Endothelial cell of umbilical vein (primary cell): ENCODE measurements at regions of chr3 and their contacts with region 1.

Region 1: GRCh38 chr3:157261000-157261399 is 101.1 kb upstream of the CCNL1 start:
- DNase-seq: no peak
- H3K4me3 ChIP-seq: no peak overlapping the region
- H3K27ac ChIP-seq: no peak overlapping the region
- H3K4me1 ChIP-seq: peaks cover 17% of the 10 kb centered on the region
- H3K27me3 ChIP-seq: no peaks in the 10 kb centered on the region
- CTCF ChIP-seq: no peak
- POLR2A ChIP-seq: no peak

Region 2: DNA sequence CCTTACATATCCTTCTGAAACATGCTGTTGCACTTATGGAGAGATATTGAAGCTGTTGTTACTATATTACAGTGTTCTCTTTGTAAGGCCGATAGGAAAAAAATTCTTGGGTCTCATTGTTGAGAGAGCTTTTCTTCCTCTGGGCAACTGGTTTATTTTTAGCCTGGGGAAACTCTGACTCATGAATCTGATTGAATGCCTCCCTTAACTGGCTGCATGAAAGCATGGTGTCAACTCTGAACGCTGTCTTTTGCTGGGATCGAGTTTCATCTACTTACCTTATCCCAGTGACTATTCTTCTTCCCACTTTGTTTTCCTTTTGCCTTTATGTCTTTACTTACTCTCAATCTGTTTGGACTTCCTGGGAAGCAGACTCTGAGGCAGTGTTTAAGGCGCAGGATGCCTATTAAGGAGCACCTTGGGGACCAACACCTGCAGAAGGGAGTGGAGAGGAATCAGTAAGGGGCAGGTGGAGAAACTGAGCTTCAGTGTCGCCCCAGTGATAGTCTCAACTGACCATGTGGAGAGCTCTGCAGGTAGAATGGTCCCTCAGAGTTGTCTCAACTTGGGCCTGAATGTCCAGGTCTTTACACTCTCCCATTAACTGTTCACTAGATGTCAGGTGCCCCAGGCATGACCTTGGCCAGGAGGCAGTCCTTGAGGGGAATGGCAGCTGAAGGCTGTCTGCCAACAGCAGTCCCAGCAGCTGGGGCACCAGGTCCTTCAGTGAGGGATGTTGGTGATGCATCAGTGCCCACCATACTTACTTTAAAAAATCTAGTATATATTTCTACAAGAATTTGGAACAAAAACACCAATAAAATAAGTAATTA is 12.2 kb before region 1 on chr3:
- CTCF ChIA-PET with region 1: interaction called, 5 read pairs
- POLR2A ChIA-PET with region 1: no interaction called
- dilution Hi-C with region 1: no loop called
- intact Hi-C with region 1: loop called (anchors 2 kb)
- DNase-seq: peak; percentile 94
- H3K4me3 ChIP-seq: no peak overlapping the region
- H3K27ac ChIP-seq: peak overlapping the region; percentile 39
- H3K4me1 ChIP-seq: peaks cover 23% of the 10 kb centered on the region
- H3K27me3 ChIP-seq: no peaks in the 10 kb centered on the region
- CTCF ChIP-seq: no peak
- POLR2A ChIP-seq: peak; percentile 37

Region 3: GRCh38 chr3:157335198-157336076 is 74.4 kb after region 1 on chr3:
- CTCF ChIA-PET with region 1: no interaction called
- POLR2A ChIA-PET with region 1: no interaction called
- dilution Hi-C with region 1: no loop called
- intact Hi-C with region 1: loop called (anchors 1 kb)
- DNase-seq: peak; percentile 98
- H3K4me3 ChIP-seq: no peak overlapping the region
- H3K27ac ChIP-seq: peak overlapping the region; percentile 84
- H3K4me1 ChIP-seq: peaks cover 43% of the 10 kb centered on the region
- H3K27me3 ChIP-seq: no peaks in the 10 kb centered on the region
- CTCF ChIP-seq: no peak
- POLR2A ChIP-seq: peak; percentile 67